Activated naive CD8-positive, alpha-beta T cell treated with anti-CD3 and anti-CD28 coated beads, Interleukin-2, amount 10 ng/mL, durations not matched to agents 7 days and 5 days (primary cell): ENCODE measurements at regions of chrX and their contacts with region 1.

Region 1: GRCh38 chrX:20437683-20438082 is 171.0 kb upstream of the RPS6KA3 start:
- DNase-seq: no peak
- ATAC-seq: peak; percentile 71
- H3K4me3 Mint-ChIP-seq: peak overlapping the region; percentile 70
- H3K27ac Mint-ChIP-seq: peak overlapping the region; percentile 98
- H3K4me1 Mint-ChIP-seq: peaks cover 50% of the 10 kb centered on the region
- H3K27me3 Mint-ChIP-seq: no peaks in the 10 kb centered on the region

Region 2: GRCh38 chrX:20412871-20413486 is 24.7 kb before region 1 on chrX:
- POLR2A ChIA-PET with region 1: interaction called, 26 read pairs
- DNase-seq: peak; percentile 45
- ATAC-seq: peak; percentile 80
- H3K4me3 Mint-ChIP-seq: peak overlapping the region; percentile 75
- H3K27ac Mint-ChIP-seq: peak overlapping the region; percentile 91
- H3K4me1 Mint-ChIP-seq: peaks cover 30% of the 10 kb centered on the region
- H3K27me3 Mint-ChIP-seq: no peaks in the 10 kb centered on the region